ENCODE measurements at regions of chr1 and their contacts with region 1.

Region 1: GRCh38 chr1:84996846-84997666 is at the start of gene MCOLN2:
- DNase-seq: peak; percentile 80
- H3K4me3 ChIP-seq: peak within 1 kb of the TSS; percentile 83
- H3K27ac ChIP-seq: peak within 1 kb of the TSS; percentile 92
- H3K4me1 ChIP-seq: peaks cover 54% of the 10 kb centered on the region
- CTCF ChIP-seq: no peak
- total RNA-seq, gene MCOLN2: 188 and 262 TPM in 2 replicates

Region 2: GRCh38 chr1:84690397-84691121 is 306.5 kb before region 1 on chr1 and contains the start of gene SSX2IP:
- CTCF ChIA-PET with region 1: no interaction called
- POLR2A ChIA-PET with region 1: no interaction called
- intact Hi-C with region 1: loop called (anchors 2 kb)
- DNase-seq: peak; percentile 97
- H3K4me3 ChIP-seq: peak within 1 kb of the TSS; percentile 84
- H3K27ac ChIP-seq: peak within 1 kb of the TSS; percentile 77
- H3K4me1 ChIP-seq: peaks cover 48% of the 10 kb centered on the region
- CTCF ChIP-seq: no peak
- total RNA-seq, gene SSX2IP: 24.1 and 29.9 TPM in 2 replicates

Region 3: GRCh38 chr1:84944767-84945486 is 52.1 kb before region 1 on chr1:
- CTCF ChIA-PET with region 1: no interaction called
- POLR2A ChIA-PET with region 1: interaction called, 4 read pairs
- intact Hi-C with region 1: loop called (anchors 1 kb)
- DNase-seq: peak; percentile 91
- H3K4me3 ChIP-seq: peak overlapping the region; percentile 55
- H3K27ac ChIP-seq: peak overlapping the region; percentile 52
- H3K4me1 ChIP-seq: peaks cover 20% of the 10 kb centered on the region
- CTCF ChIP-seq: peak; percentile 99

Region 4: DNA sequence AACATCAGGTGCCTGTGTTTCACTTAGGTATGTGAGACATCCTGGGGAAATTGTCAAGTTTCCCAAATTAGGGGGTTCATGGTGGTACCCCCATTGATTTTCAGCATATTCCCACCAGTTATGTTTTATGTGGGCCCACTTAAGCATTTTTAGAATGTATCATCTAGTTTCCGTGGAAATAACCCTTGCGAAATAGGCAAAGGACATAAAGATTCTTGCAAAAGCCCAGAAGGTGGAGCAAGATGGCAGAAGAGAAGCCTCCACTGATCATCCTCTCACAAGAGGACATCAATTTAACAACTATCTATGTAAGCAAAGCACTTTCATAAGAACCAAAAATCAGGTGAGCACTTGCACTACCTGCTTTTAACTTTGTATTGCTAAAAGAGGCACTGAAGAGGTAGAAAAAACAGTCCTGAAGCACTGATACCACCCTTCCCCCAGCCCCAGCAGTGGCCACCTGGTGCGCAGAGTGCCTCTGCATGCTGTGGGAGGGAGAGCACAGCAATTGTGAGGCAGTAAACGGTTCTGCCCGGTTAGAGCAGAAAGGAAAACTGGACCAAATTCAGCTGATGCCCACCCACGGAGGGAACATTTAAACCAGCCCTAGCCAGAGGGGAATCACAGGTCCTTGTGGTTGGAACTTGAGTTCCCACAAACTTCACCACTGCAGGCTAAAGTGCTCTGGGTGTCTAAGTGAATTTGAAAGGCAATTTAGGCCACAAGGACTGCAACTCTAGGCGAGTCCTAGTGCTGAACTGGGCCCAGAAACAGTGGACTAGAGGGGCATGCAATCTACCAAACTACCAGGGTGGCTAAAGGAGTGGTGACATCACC is 23.3 kb before region 1 on chr1:
- CTCF ChIA-PET with region 1: interaction called, 4 read pairs
- POLR2A ChIA-PET with region 1: interaction called, 30 read pairs
- intact Hi-C with region 1: loop called (anchors 1 kb)
- DNase-seq: peak; percentile 61
- H3K4me3 ChIP-seq: peak overlapping the region; percentile 26
- H3K27ac ChIP-seq: peak overlapping the region; percentile 54
- H3K4me1 ChIP-seq: peaks cover 52% of the 10 kb centered on the region
- CTCF ChIP-seq: peak; percentile 67

Region 5: GRCh38 chr1:85027242-85027983 is 30.4 kb after region 1 on chr1:
- CTCF ChIA-PET with region 1: no interaction called
- POLR2A ChIA-PET with region 1: interaction called, 3 read pairs
- intact Hi-C with region 1: loop called (anchors 1 kb)
- DNase-seq: peak; percentile 58
- H3K4me3 ChIP-seq: no peak overlapping the region
- H3K27ac ChIP-seq: no peak overlapping the region
- H3K4me1 ChIP-seq: peaks cover 4% of the 10 kb centered on the region
- CTCF ChIP-seq: peak; percentile 70

Region 6: GRCh38 chr1:85259118-85259911 is 262.3 kb after region 1 on chr1 and contains the start of gene C1orf52:
- CTCF ChIA-PET with region 1: no interaction called
- POLR2A ChIA-PET with region 1: interaction called, 3 read pairs
- intact Hi-C with region 1: loop called (anchors 5 kb)
- DNase-seq: peak; percentile 95
- H3K4me3 ChIP-seq: peak within 1 kb of the TSS; percentile 98
- H3K27ac ChIP-seq: peak within 1 kb of the TSS; percentile 47
- H3K4me1 ChIP-seq: peaks cover 19% of the 10 kb centered on the region
- CTCF ChIP-seq: peak; percentile 90
- total RNA-seq, gene C1orf52: 35.6 and 55.3 TPM in 2 replicates

Region 7: GRCh38 chr1:85276215-85276977 is 279.3 kb after region 1 on chr1 and contains the start of gene BCL10:
- CTCF ChIA-PET with region 1: no interaction called
- POLR2A ChIA-PET with region 1: interaction called, 4 read pairs
- intact Hi-C with region 1: loop called (anchors 5 kb)
- DNase-seq: peak; percentile 98
- H3K4me3 ChIP-seq: peak within 1 kb of the TSS; percentile 96
- H3K27ac ChIP-seq: peak within 1 kb of the TSS; percentile 82
- H3K4me1 ChIP-seq: peaks cover 25% of the 10 kb centered on the region
- CTCF ChIP-seq: no peak
- total RNA-seq, gene BCL10: 10.6 and 17.4 TPM in 2 replicates